CD4-positive, alpha-beta memory T cell (primary cell): ENCODE measurements at regions of chr11 and their contacts with region 1.

Region 1: DNA sequence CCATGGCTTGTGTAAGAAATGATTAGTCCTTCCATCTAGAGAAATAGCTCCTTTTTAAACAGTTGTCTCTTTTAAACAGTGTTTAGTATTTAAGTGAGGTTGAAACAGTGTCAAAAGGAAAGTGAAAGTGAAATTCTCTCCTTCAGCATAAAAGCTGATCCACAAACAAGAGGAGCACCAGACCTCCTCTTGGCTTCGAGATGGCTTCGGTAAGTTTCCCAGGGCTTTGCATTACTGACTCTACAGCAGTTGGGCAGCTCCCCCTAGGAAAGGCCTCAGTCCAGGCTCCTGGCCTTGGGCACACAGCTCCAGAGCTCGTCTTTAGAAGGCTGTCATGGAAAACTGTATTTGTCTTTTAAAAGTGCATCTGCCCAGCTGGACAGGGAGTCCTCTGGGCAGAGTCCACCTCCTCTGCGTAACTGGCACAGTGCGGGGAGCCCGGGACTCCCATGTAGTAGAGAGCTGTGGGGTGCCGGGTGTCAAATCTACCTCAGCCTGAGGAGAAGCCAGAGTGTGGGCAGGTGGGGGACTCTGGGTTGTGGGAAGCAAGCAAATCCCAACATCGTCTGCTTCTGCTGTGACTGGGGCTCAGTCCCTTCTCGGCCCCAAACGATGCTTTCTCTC is at the start of gene PLAAT4:
- DNase-seq: peak; percentile 54 to 69 (median 59)
- H3K4me3 ChIP-seq: peak within 1 kb of the TSS; percentile 83 to 89
- H3K4me3 Mint-ChIP-seq: peak within 1 kb of the TSS; percentile 95 to 99 (median 96)
- H3K27ac ChIP-seq: peak within 1 kb of the TSS; percentile 77
- H3K27ac Mint-ChIP-seq: peak within 1 kb of the TSS; percentile 96 to 99 (median 98)
- H3K4me1 ChIP-seq: peaks cover 93% of the 10 kb centered on the region
- H3K4me1 Mint-ChIP-seq: peaks cover 63 to 97% (median 82%) of the 10 kb centered on the region in 4 donors
- H3K27me3 ChIP-seq: no peaks in the 10 kb centered on the region
- H3K27me3 Mint-ChIP-seq: no peaks in the 10 kb centered on the region
- total RNA-seq, gene PLAAT4: 152 to 167 TPM

Region 2: GRCh38 chr11:63490551-63491239 is 46.1 kb before region 1 on chr11 and contains the start of gene PLAAT5:
- CTCF ChIA-PET with region 1: interaction called, 14 read pairs
- POLR2A ChIA-PET with region 1: interaction called, 20 read pairs
- intact Hi-C with region 1: loop called (anchors 2 kb)
- DNase-seq: peak in 3 of 5 donors; percentile 9 to 16 (median 16)
- H3K4me3 ChIP-seq: peak within 1 kb of the TSS in 1 of 2 donors; percentile 18
- H3K4me3 Mint-ChIP-seq: peak within 1 kb of the TSS; percentile 80 to 93 (median 86)
- H3K27ac ChIP-seq: no peak within 1 kb of the TSS
- H3K27ac Mint-ChIP-seq: peak within 1 kb of the TSS; percentile 32 to 89 (median 58)
- H3K4me1 ChIP-seq: peaks cover 13% of the 10 kb centered on the region
- H3K4me1 Mint-ChIP-seq: peaks cover 13 to 26% (median 17%) of the 10 kb centered on the region in 4 donors
- H3K27me3 ChIP-seq: no peaks in the 10 kb centered on the region
- H3K27me3 Mint-ChIP-seq: peaks cover 5 to 10% of the 10 kb centered on the region in 2 donors
- total RNA-seq, gene PLAAT5: not detected

Region 3: DNA sequence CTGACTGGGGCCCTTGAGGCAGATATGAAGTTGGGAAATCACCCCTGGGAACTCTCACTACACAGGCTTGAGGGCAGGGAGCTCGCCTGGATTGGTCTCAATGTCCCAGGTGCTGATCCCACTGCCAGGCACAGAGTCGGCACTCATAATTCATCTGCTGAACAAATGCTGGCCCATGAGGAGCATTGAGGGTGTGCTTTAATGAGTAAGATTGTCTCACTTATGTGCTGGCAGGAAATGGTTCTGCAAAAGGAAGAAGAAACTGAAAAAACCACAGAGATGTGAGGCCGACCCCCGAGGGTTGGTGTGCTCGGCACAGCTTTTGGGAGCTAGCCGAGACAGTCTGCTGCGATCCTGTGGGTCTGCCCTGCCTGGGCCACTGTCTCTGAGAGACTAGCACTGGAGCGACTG is 17.0 kb after region 1 on chr11:
- CTCF ChIA-PET with region 1: interaction called, 23 read pairs
- POLR2A ChIA-PET with region 1: interaction called, 132 read pairs
- intact Hi-C with region 1: loop called (anchors 2 kb)
- DNase-seq: peak; percentile 38 to 77 (median 52)
- H3K4me3 ChIP-seq: peak overlapping the region in 1 of 2 donors; percentile 53
- H3K4me3 Mint-ChIP-seq: peak overlapping the region; percentile 57 to 94 (median 89)
- H3K27ac ChIP-seq: peak overlapping the region; percentile 62
- H3K27ac Mint-ChIP-seq: peak overlapping the region; percentile 84 to 98 (median 95)
- H3K4me1 ChIP-seq: peaks cover 38% of the 10 kb centered on the region
- H3K4me1 Mint-ChIP-seq: peaks cover 37 to 56% (median 45%) of the 10 kb centered on the region in 4 donors
- H3K27me3 ChIP-seq: no peaks in the 10 kb centered on the region
- H3K27me3 Mint-ChIP-seq: no peaks in the 10 kb centered on the region

Region 4: DNA sequence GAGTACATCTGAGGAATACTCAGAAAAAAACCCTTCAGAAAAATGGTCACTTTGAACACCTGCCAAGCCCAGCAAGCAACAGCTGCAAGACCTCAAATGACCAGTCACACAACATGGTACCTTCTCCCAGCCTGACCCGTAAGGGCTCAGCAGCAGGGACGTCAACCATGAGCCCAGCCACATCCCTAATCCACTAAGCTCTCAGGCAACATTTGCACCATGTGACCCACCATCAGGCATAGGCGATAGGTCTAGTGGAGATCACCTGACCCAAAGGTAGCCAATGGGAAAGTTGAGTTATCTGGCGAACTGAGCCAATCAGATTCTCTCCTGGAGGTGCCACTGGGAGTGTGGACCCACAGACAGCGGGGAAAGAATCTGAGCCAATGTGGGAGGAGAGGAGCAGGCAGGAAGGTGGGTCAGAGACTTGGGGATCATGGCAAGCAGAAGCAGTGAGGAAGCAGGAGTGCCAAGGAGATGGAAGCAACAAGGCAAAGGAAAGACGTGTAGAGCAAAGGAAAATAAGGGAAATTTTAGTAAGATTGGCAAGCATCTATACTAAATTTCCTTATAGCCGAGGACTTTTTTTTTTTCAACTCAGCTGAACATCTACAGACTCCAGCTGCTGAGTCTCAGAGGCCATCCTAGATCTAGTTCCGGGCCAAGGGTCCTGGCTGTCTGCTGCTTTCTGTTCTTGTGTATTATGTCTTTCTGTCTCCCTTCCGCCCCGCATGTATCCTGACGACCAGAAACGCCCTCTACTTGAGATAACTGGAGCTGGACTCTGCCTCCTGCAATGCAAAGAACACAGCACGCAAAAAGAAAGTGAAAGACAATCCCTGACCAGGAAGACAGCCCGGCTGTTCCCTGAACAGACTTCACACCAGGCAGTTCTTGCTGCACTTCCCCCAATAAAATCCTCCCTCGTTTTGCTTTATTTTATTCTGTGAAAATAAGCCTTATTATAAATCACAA is 37.4 kb after region 1 on chr11:
- CTCF ChIA-PET with region 1: interaction called, 7 read pairs
- POLR2A ChIA-PET with region 1: interaction called, 15 read pairs
- intact Hi-C with region 1: no loop called
- DNase-seq: peak in 4 of 5 donors; percentile 27 to 52 (median 34)
- H3K4me3 ChIP-seq: peak overlapping the region; percentile 4 to 34
- H3K4me3 Mint-ChIP-seq: peak overlapping the region; percentile 84 to 94 (median 89)
- H3K27ac ChIP-seq: peak overlapping the region; percentile 36
- H3K27ac Mint-ChIP-seq: peak overlapping the region; percentile 25 to 98 (median 90)
- H3K4me1 ChIP-seq: peaks cover 15% of the 10 kb centered on the region
- H3K4me1 Mint-ChIP-seq: peaks cover 14 to 22% (median 19%) of the 10 kb centered on the region in 4 donors
- H3K27me3 ChIP-seq: no peaks in the 10 kb centered on the region
- H3K27me3 Mint-ChIP-seq: no peaks in the 10 kb centered on the region

Region 5: DNA sequence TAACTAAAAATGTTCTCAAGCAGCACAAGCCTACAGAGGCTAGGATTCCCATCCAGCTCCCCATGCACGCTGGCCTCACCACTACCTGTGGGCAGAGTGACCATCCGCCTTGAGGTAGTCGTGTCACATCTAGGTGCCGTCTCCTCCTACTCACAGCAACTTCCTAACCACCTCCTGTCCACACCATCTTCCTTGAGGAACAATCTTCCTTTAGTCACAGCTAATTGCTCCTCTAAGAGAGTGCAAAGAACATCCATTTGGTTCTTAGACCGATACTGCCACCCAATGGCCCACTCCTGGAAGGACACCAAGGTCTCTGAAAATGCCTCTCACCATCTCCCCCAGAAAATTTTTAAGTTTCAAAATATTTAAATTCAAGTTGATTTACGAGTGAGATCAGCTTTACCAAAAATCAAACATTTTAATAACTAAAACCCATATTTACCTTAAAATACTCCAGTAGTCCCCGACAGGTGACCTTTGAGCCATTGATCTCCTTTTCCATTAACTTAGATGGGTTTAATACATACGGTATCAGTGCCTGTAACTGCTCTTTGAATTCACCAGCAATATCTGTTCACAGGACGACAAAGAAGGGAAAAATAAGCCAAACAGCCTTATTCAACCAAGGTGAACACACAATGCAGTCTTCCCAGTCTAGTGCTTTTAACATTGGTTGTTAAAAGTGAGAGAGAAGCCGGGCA is 99.1 kb after region 1 on chr11:
- CTCF ChIA-PET with region 1: interaction called, 8 read pairs
- POLR2A ChIA-PET with region 1: no interaction called
- intact Hi-C with region 1: loop called (anchors 5 kb)
- DNase-seq: peak; percentile 56 to 69 (median 66)
- H3K4me3 ChIP-seq: no peak overlapping the region
- H3K4me3 Mint-ChIP-seq: no peak overlapping the region
- H3K27ac ChIP-seq: no peak overlapping the region
- H3K27ac Mint-ChIP-seq: peak overlapping the region in 1 of 7 donors; percentile 7
- H3K4me1 ChIP-seq: no peaks in the 10 kb centered on the region
- H3K4me1 Mint-ChIP-seq: peaks cover 10 to 14% (median 10%) of the 10 kb centered on the region in 4 donors
- H3K27me3 ChIP-seq: no peaks in the 10 kb centered on the region
- H3K27me3 Mint-ChIP-seq: no peaks in the 10 kb centered on the region